ENCODE measurements at regions of chr19 and their contacts with region 1.

Region 1: DNA sequence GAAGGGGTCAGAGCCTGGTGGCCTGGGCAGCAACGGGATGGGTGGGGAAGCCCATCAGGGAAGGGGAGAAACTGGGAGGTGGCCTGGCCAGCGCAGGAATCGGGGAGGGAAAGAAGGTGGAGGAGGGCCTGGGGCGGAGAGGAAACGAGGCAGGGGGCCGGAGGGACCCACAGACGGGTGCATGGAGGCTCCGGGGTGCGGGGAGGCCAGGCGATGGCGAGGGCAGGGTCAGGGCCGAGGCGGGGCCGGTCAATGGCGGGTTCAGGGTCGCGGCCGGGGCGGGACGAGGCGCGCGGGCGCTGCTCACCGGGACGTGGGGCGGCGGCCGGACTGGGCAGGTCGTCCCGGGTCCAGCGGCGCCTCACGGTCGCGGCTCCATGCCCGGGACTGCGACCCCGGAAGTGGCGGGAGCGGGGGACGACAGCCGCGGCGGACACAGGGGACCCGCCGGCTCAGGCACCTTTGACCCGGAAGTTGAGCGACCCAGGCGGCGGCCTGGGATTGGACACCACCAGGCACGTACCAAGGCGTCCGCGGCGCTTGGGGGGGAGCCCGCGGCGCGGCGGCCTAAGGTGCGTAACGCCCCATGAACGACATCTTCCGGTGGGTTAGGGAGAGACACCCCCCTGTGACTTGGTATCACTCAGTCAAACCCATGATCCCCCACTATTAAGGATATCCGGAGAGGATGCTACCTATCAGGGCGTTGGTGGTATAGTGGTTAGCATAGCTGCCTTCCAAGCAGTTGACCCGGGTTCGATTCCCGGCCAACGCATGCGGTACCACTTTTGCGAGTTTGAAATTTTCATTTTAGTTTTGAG is at the start of gene DPP9:
- DNase-seq: peak; percentile 98
- H3K4me3 ChIP-seq: peak within 1 kb of the TSS; percentile 49 to 88 (median 54)
- H3K27ac ChIP-seq: peak within 1 kb of the TSS; percentile 62
- H3K4me1 ChIP-seq: peaks cover 15% of the 10 kb centered on the region
- H3K27me3 ChIP-seq: no peaks in the 10 kb centered on the region
- CTCF ChIP-seq: peak in 1 of 2 donors; percentile 4
- POLR2A ChIP-seq: peak; percentile 61
- total RNA-seq, gene DPP9: 87.6 and 98.0 TPM in 2 replicates

Region 2: GRCh38 chr19:4576016-4576933 is 147.3 kb before region 1 on chr19:
- CTCF ChIA-PET with region 1: no interaction called
- POLR2A ChIA-PET with region 1: no interaction called
- dilution Hi-C with region 1: no loop called
- intact Hi-C with region 1: loop called (anchors 5 kb)
- DNase-seq: peak; percentile 72
- H3K4me3 ChIP-seq: no peak overlapping the region
- H3K27ac ChIP-seq: peak overlapping the region; percentile 99
- H3K4me1 ChIP-seq: peaks cover 24% of the 10 kb centered on the region
- H3K27me3 ChIP-seq: no peaks in the 10 kb centered on the region
- CTCF ChIP-seq: peak; percentile 82
- POLR2A ChIP-seq: no peak

Region 3: DNA sequence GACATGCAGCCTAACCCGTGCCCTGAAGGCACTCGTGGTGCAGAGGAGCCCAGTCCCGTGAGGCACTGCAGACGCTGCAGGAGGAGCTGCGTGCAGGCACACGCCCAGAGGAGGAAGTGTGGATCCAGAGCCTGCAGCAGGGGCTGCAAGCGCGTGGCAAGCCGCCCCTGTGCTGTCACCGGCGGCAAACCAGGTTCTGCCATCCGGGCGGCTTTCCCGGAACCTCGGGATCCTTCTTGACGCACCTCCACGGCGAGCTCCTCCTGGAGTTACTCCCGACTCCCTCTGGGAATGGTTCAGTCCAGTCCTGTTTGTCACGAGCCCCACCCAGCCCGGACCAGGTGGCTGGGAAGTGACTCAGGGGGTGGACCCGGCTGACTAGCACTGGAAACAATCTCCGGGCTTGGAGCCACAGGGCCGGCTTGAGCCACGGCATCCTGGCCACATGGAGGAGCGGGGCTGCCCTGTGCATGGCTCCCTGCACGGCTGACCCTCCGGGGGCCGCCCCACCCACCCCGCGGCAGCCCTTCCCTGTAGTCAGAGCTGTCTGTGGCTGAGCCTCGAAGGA is 10.1 kb before region 1 on chr19:
- CTCF ChIA-PET with region 1: interaction called, 9 read pairs
- POLR2A ChIA-PET with region 1: no interaction called
- dilution Hi-C with region 1: no loop called
- intact Hi-C with region 1: loop called (anchors 1 kb)
- DNase-seq: peak; percentile 94
- H3K4me3 ChIP-seq: no peak overlapping the region
- H3K27ac ChIP-seq: peak overlapping the region; percentile 69
- H3K4me1 ChIP-seq: peaks cover 38% of the 10 kb centered on the region
- H3K27me3 ChIP-seq: no peaks in the 10 kb centered on the region
- CTCF ChIP-seq: no peak
- POLR2A ChIP-seq: peak; percentile 79

Region 4: DNA sequence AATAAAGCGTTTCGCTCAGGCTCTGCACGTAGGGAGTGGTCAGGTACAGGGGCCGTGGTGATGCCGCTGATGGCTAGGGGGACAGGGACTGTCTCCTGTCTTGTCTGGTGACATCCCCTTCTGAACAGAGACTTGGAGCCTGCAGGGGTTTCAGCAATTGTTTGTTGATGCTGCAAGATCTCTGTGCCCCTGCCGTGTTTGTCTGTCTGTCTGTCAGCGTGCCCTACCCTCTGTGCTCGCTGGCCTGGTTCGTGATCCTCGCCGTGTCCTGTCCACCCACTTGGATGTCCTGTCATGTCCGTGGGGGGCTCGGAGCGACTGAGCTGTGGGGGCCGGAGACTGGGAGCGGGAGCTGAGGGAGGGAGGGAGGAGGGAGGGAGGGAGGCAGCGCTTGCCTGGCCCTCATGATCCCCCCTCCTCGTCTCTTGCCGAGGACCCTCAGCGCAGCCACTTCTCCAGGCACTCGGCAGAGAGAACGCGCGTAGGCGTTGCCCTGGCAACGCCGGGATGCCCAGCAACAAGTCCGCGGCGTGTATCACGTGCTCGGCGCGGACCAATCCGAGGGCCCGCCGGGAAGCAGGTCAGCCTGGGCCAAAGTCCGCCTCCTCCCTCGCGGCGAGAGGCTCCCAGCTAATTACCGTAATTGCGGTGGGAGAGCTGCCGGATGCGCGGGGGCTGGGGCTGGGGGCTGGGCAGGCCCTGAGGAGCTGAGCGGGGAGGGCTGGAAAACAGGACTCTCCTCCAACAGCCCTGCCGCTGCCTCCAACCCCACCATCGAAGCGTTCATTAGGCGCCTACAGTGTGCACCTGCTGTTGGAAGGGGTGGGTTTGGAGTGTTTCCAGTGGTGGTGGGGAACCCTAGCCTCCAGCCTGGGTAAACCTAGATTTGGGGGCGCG is 36.1 kb after region 1 on chr19:
- CTCF ChIA-PET with region 1: no interaction called
- POLR2A ChIA-PET with region 1: no interaction called
- dilution Hi-C with region 1: no loop called
- intact Hi-C with region 1: no loop called
- DNase-seq: peak; percentile 83
- H3K4me3 ChIP-seq: peak overlapping the region in 1 of 3 experiments; percentile 24
- H3K27ac ChIP-seq: no peak overlapping the region
- H3K4me1 ChIP-seq: peaks cover 3% of the 10 kb centered on the region
- H3K27me3 ChIP-seq: peaks cover 0 to 2% of the 10 kb centered on the region in 2 experiments
- CTCF ChIP-seq: no peak
- POLR2A ChIP-seq: no peak

Region 5: DNA sequence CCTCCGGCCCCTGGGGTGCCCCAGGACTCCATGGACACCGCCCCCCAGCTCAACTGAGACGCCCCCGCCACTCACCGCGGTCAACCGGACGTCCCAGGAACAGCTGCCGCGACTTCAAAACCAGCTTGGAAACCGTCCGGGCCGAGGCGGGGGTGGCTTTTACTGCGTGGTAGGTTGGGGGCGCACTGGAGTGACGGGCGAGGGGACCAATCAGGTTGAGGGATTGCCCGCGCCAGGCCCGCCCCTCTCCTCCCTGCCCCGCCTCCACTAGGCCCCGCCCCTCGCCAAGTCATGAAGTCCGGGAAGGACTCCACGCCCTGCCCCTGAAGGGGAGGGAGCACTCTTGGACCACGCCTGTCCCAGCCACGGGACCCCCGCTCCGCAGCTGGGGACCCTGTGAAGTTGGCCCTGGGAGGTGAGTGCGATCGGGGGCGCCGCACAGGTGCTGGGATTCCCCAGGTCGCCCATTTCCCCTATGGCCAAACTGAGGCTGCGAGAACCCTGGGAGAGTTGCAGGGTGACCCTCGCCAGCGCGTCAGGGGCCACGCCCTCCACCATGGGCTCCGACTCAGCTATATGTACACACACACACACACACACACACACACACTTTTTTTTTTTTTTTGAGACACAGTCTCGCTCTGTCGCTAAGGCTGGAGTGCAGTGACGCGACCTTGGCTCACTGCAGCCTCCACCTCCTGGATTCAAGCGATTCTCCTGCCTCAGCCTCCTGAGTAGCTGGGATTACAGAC is 144.1 kb after region 1 on chr19 and contains the start of gene PLIN3:
- CTCF ChIA-PET with region 1: no interaction called
- POLR2A ChIA-PET with region 1: interaction called, 5 read pairs
- dilution Hi-C with region 1: no loop called
- intact Hi-C with region 1: loop called (anchors 5 kb)
- DNase-seq: peak; percentile 98
- H3K4me3 ChIP-seq: peak within 1 kb of the TSS; percentile 70 to 95 (median 92)
- H3K27ac ChIP-seq: peak within 1 kb of the TSS; percentile 49
- H3K4me1 ChIP-seq: peaks cover 6% of the 10 kb centered on the region
- H3K27me3 ChIP-seq: no peaks in the 10 kb centered on the region
- CTCF ChIP-seq: no peak
- POLR2A ChIP-seq: peak; percentile 43
- total RNA-seq, gene PLIN3: 76.8 and 77.9 TPM in 2 replicates